Spleen (tissue), 13 donors: ENCODE measurements at regions of chr9 and their contacts with region 1.

Region 1: GRCh38 chr9:78746010-78746409 is 449.1 kb downstream of the PSAT1 start:
- DNase-seq: no peak
- H3K4me3 ChIP-seq: no peak overlapping the region
- H3K27ac ChIP-seq: no peak overlapping the region
- H3K4me1 ChIP-seq: no peaks in the 10 kb centered on the region
- H3K27me3 ChIP-seq: no peaks in the 10 kb centered on the region
- CTCF ChIP-seq: no peak
- POLR2A ChIP-seq: no peak

Region 2: GRCh38 chr9:79046401-79046800 is 300.4 kb after region 1 on chr9:
- intact Hi-C with region 1: loop called (anchors 10 kb)
- DNase-seq: no peak
- H3K4me3 ChIP-seq: no peak overlapping the region
- H3K27ac ChIP-seq: no peak overlapping the region
- H3K4me1 ChIP-seq: no peaks in the 10 kb centered on the region
- H3K27me3 ChIP-seq: no peaks in the 10 kb centered on the region
- CTCF ChIP-seq: no peak
- POLR2A ChIP-seq: no peak